Tibial artery (tissue), 4 donors: ENCODE measurements at regions of chr17 and their contacts with region 1.

Region 1: DNA sequence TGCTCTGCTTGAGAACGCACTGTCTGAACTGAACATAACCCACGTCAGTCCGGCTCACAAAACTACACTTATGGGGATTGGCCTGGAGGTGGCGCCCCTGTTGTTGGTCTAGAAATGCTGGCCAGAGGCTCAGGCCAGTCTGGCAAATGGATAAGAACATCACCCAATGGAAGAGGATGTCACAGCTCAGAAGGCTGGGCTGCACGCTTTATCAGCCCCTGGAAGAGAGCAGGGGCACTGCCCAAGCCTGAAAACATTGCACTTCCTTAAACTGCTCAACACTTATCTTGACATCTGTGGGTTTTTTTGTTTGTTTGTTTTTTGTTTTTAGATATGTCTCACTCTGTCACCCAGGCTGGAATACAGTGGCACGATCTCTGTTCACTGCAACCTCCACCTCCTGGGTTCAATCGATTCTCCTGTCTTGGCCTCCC is 24.8 kb upstream of the BPTF start:
- DNase-seq: peak; percentile 79 to 80
- H3K4me3 ChIP-seq: no peak overlapping the region
- H3K27ac ChIP-seq: no peak overlapping the region
- H3K4me1 ChIP-seq: no peaks in the 10 kb centered on the region
- H3K27me3 ChIP-seq: peaks cover 0 to 3% of the 10 kb centered on the region in 2 donors
- CTCF ChIP-seq: peak; percentile 41 to 44

Region 2: GRCh38 chr17:67879662-67880061 is 79.2 kb after region 1 on chr17:
- intact Hi-C with region 1: loop called (anchors 10 kb)
- DNase-seq: no peak
- H3K4me3 ChIP-seq: no peak overlapping the region
- H3K27ac ChIP-seq: no peak overlapping the region
- H3K4me1 ChIP-seq: no peaks in the 10 kb centered on the region
- H3K27me3 ChIP-seq: no peaks in the 10 kb centered on the region
- CTCF ChIP-seq: no peak